GM18951 (cell line): ENCODE measurements at regions of chr5 and their contacts with region 1.

Region 1: GRCh38 chr5:32092938-32093812 is 80.9 kb downstream of the GOLPH3 start:
- POLR2A ChIP-seq: no peak

Region 2: GRCh38 chr5:31573494-31574142 is 519.6 kb before region 1 on chr5:
- in situ Hi-C with region 1: loop called (anchors 10 kb)
- POLR2A ChIP-seq: no peak

Region 3: GRCh38 chr5:31614151-31615020 is 478.8 kb before region 1 on chr5:
- in situ Hi-C with region 1: no loop called
- POLR2A ChIP-seq: no peak

Region 4: DNA sequence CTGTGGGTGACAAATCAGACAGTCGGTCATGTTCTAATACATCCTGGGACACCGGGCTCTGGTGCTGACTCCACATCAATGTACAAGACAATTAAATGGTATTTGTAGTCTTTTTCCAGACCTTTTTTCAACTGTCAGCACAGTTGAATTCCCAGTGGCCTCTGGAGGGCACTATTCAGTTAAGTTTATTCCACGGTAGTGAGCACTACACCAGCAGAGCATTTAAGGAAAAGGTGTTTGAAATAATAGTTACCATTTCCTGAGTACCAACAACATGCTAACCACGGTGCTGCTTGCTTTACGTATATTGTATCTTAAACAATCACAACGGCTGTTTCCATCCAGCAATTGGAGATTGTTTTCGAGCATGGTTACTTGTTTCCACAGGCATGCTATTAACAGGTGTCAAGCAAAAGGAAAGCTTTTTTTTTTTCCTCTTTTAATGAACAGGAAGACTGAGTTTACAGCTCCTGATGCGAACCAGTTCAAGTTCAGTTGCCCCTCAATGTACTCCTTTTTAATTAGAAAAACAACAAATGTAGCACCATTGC is 267.6 kb before region 1 on chr5:
- in situ Hi-C with region 1: loop called (anchors 10 kb)
- POLR2A ChIP-seq: no peak